Naive thymus-derived CD4-positive, alpha-beta T cell (primary cell): ENCODE measurements at regions of chr1 and their contacts with region 1.

Region 1: DNA sequence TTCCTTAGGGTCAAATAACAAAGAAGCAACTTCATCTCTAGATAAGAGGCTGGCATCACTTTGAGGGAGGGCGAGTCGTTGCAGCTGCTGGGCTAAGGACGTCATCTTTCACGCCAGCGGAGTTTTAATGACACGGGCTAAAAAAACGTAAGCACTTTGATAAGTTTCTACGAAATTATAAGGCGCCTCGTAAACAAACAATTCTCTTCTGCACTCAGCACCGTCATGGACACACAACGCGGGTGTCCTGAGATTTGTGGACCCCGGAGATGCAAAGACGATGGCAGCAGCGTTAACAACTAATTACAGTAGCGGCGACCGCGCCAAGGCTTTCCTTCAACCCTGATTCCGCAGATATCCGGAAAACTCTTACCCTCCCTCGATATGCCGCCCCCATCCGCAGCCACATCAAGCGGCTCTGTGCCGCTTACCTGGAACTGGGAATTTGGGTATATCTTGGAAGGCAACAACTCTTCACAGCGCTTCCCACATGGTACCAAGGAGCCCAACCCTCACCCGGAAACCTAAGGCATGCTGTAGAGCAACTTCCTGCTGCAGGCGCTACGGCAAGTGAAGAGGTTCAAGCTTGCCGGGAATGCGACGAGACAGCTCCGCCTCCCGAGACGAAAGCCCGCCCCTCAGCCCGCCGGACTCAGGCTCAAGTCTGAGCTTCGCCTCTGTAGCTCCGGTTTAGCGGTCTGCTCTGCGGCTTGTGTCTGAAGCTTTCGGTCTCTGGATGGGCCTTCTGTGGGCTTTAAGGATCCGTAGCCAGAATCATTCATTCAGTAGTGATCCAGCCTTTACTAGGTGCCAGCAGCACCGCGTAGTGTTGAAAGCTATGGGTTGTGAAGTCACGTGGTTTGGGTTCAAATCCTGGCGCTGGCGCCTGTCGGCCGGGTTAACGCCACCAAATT is at the start of gene HEATR1:
- DNase-seq: peak; percentile 58 to 88 (median 84)
- ATAC-seq: peak; percentile 94
- H3K4me3 ChIP-seq: peak within 1 kb of the TSS; percentile 88
- H3K4me3 Mint-ChIP-seq: peak within 1 kb of the TSS; percentile 91 to 99 (median 98)
- H3K27ac ChIP-seq: peak within 1 kb of the TSS; percentile 79
- H3K27ac Mint-ChIP-seq: peak within 1 kb of the TSS; percentile 93 to 98 (median 97)
- H3K4me1 ChIP-seq: peaks cover 13 to 14% of the 10 kb centered on the region in 2 donors
- H3K4me1 Mint-ChIP-seq: peaks cover 20 to 49% (median 32%) of the 10 kb centered on the region in 7 donors
- H3K27me3 ChIP-seq: peaks cover 0 to 4% of the 10 kb centered on the region in 2 donors
- H3K27me3 Mint-ChIP-seq: peaks cover 4 to 14% (median 13%) of the 10 kb centered on the region in 5 donors
- total RNA-seq, gene HEATR1: 29.3 to 58.7 (median 45.8) TPM

Region 2: GRCh38 chr1:236103646-236104218 is 500.5 kb before region 1 on chr1:
- CTCF ChIA-PET with region 1: no interaction called
- POLR2A ChIA-PET with region 1: no interaction called
- intact Hi-C with region 1: loop called in 1 of 2 experiments (anchors 10 kb)
- DNase-seq: peak; percentile 26 to 69 (median 51)
- ATAC-seq: peak; percentile 74
- H3K4me3 ChIP-seq: no peak overlapping the region
- H3K4me3 Mint-ChIP-seq: peak overlapping the region in 1 of 10 donors; percentile 12
- H3K27ac ChIP-seq: no peak overlapping the region
- H3K27ac Mint-ChIP-seq: no peak overlapping the region
- H3K4me1 ChIP-seq: no peaks in the 10 kb centered on the region
- H3K4me1 Mint-ChIP-seq: peaks cover 0 to 9% (median 3%) of the 10 kb centered on the region in 7 donors
- H3K27me3 ChIP-seq: no peaks in the 10 kb centered on the region
- H3K27me3 Mint-ChIP-seq: peaks cover 0 to 4% (median 0%) of the 10 kb centered on the region in 5 donors

Region 3: GRCh38 chr1:236281654-236282424 is 322.4 kb before region 1 on chr1 and contains the start of gene ERO1B:
- CTCF ChIA-PET with region 1: no interaction called
- POLR2A ChIA-PET with region 1: no interaction called
- intact Hi-C with region 1: loop called (anchors 1 kb)
- DNase-seq: peak; percentile 95 to 99 (median 97)
- ATAC-seq: peak; percentile 98
- H3K4me3 ChIP-seq: peak within 1 kb of the TSS; percentile 83
- H3K4me3 Mint-ChIP-seq: peak within 1 kb of the TSS; percentile 80 to 97 (median 94)
- H3K27ac ChIP-seq: peak within 1 kb of the TSS; percentile 82
- H3K27ac Mint-ChIP-seq: peak within 1 kb of the TSS; percentile 80 to 96 (median 95)
- H3K4me1 ChIP-seq: peaks cover 7 to 34% of the 10 kb centered on the region in 2 donors
- H3K4me1 Mint-ChIP-seq: peaks cover 29 to 82% (median 57%) of the 10 kb centered on the region in 7 donors
- H3K27me3 ChIP-seq: no peaks in the 10 kb centered on the region
- H3K27me3 Mint-ChIP-seq: peaks cover 0 to 10% (median 0%) of the 10 kb centered on the region in 5 donors
- total RNA-seq, gene ERO1B: 5.0 to 26.8 (median 16.0) TPM

Region 4: GRCh38 chr1:236523701-236524141 is 80.5 kb before region 1 on chr1 and contains the start of gene LGALS8:
- CTCF ChIA-PET with region 1: no interaction called
- POLR2A ChIA-PET with region 1: no interaction called
- intact Hi-C with region 1: loop called (anchors 1 kb)
- DNase-seq: peak; percentile 68 to 87 (median 83)
- ATAC-seq: peak; percentile 90
- H3K4me3 ChIP-seq: peak within 1 kb of the TSS; percentile 70
- H3K4me3 Mint-ChIP-seq: peak within 1 kb of the TSS; percentile 93 to 100 (median 99)
- H3K27ac ChIP-seq: peak within 1 kb of the TSS; percentile 87
- H3K27ac Mint-ChIP-seq: peak within 1 kb of the TSS; percentile 97 to 99 (median 98)
- H3K4me1 ChIP-seq: peaks cover 4 to 5% of the 10 kb centered on the region in 2 donors
- H3K4me1 Mint-ChIP-seq: peaks cover 8 to 38% (median 35%) of the 10 kb centered on the region in 7 donors
- H3K27me3 ChIP-seq: no peaks in the 10 kb centered on the region
- H3K27me3 Mint-ChIP-seq: peaks cover 0 to 3% (median 0%) of the 10 kb centered on the region in 5 donors
- total RNA-seq, gene LGALS8: 114 to 143 (median 134) TPM

Region 5: GRCh38 chr1:236795035-236795756 is 190.9 kb after region 1 on chr1 and contains the start of gene MTR:
- CTCF ChIA-PET with region 1: interaction called, 4 read pairs
- POLR2A ChIA-PET with region 1: interaction called, 6 read pairs
- intact Hi-C with region 1: loop called (anchors 1 kb)
- DNase-seq: peak; percentile 84 to 97 (median 96)
- ATAC-seq: peak; percentile 95
- H3K4me3 ChIP-seq: peak within 1 kb of the TSS; percentile 61
- H3K4me3 Mint-ChIP-seq: peak within 1 kb of the TSS; percentile 87 to 99 (median 95)
- H3K27ac ChIP-seq: peak within 1 kb of the TSS; percentile 98
- H3K27ac Mint-ChIP-seq: peak within 1 kb of the TSS; percentile 93 to 100 (median 97)
- H3K4me1 ChIP-seq: peaks cover 13 to 14% of the 10 kb centered on the region in 2 donors
- H3K4me1 Mint-ChIP-seq: peaks cover 14 to 49% (median 41%) of the 10 kb centered on the region in 7 donors
- H3K27me3 ChIP-seq: no peaks in the 10 kb centered on the region
- H3K27me3 Mint-ChIP-seq: peaks cover 0 to 13% (median 0%) of the 10 kb centered on the region in 5 donors
- total RNA-seq, gene MTR: 42.9 to 78.8 (median 49.4) TPM

Region 6: DNA sequence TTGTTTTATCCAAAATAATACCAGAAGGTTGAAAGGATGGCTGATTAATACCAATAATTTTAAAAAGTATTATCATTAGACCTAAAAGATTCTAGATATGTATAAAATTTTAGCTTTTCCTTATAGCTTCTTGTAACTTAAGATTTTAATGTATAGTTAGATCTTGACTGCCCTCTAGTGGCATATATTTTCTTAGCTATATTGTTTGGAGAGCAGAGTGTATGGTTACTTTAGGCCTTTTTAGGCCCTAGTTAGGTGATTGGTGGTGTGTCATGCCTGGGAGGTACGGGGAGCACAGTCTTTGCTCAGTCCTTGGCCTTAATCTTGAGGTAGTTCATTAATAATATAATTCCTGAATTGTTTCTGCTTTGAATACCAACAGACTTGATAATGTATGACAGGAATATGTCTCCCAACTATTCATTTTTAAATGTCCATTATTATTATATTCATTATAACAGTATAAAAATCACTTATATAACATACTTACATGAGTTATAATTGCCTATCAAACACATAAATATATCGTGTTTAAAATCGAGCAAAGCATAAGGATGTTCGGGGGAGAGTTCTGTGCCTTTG is 958.1 kb after region 1 on chr1:
- CTCF ChIA-PET with region 1: no interaction called
- POLR2A ChIA-PET with region 1: no interaction called
- intact Hi-C with region 1: loop called in 1 of 2 experiments (anchors 5 kb)
- DNase-seq: peak in 6 of 9 donors; percentile 1 to 37 (median 29)
- ATAC-seq: peak; percentile 40
- H3K4me3 ChIP-seq: no peak overlapping the region
- H3K4me3 Mint-ChIP-seq: no peak overlapping the region
- H3K27ac ChIP-seq: no peak overlapping the region
- H3K27ac Mint-ChIP-seq: no peak overlapping the region
- H3K4me1 ChIP-seq: no peaks in the 10 kb centered on the region
- H3K4me1 Mint-ChIP-seq: no peaks in the 10 kb centered on the region
- H3K27me3 ChIP-seq: no peaks in the 10 kb centered on the region
- H3K27me3 Mint-ChIP-seq: peaks cover 3 to 19% (median 11%) of the 10 kb centered on the region in 5 donors